ENCODE measurements at regions of chr17 and their contacts with region 1.

Region 1: DNA sequence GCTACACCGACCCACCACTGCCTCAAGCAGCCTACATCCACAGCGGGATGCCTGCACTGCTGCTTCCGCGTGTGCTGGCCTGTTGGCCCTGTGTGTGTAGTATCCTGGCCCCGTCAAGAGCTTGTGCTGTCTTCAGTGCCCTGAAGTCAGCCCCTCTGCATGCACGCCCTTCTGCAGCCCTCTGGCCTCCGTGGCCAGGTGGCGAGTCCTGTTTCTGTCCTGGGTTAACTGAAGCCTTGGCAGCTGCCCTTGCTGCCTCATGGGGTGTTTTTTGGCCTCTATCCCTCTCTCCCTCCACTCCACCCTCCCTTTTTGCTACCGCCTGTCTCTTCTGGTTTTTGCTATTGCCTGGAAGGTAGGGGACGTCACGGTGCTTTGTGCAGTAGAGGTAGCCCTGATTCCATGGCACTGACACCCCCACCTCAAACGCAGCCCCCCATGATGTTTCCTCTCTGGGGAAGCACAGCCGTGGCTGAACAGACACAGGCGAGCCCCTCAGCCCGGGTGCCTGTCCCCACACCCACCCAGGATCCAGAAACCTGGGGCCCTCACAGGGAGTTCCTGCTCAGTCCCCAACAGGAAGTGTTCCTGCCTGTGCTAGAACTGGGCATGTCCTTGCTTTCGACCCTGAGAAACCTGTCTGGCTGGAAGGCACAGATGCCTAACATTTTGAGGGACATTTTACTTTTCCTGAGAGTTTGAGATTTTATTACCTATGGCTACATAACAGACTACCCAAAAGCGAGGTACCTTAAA is 18.8 kb upstream of the AMZ2 start:
- DNase-seq: no peak
- H3K4me3 ChIP-seq: no peak overlapping the region
- H3K4me3 Mint-ChIP-seq: no peak overlapping the region
- H3K27ac Mint-ChIP-seq: peak overlapping the region; percentile 35
- H3K4me1 ChIP-seq: no peaks in the 10 kb centered on the region
- H3K4me1 Mint-ChIP-seq: no peaks in the 10 kb centered on the region
- H3K27me3 ChIP-seq: no peaks in the 10 kb centered on the region
- H3K27me3 Mint-ChIP-seq: peaks cover 2% of the 10 kb centered on the region
- CTCF ChIP-seq: no peak

Region 2: GRCh38 chr17:68152161-68152571 is 76.8 kb before region 1 on chr17:
- CTCF ChIA-PET with region 1: no interaction called
- POLR2A ChIA-PET with region 1: no interaction called
- intact Hi-C with region 1: loop called (anchors 2 kb)
- DNase-seq: no peak
- H3K4me3 ChIP-seq: no peak overlapping the region
- H3K4me3 Mint-ChIP-seq: no peak overlapping the region
- H3K27ac Mint-ChIP-seq: no peak overlapping the region
- H3K4me1 ChIP-seq: no peaks in the 10 kb centered on the region
- H3K4me1 Mint-ChIP-seq: no peaks in the 10 kb centered on the region
- H3K27me3 ChIP-seq: no peaks in the 10 kb centered on the region; the same call in 1 of the 2 replicates
- H3K27me3 Mint-ChIP-seq: peaks cover 3% of the 10 kb centered on the region
- CTCF ChIP-seq: no peak

Region 3: GRCh38 chr17:68247445-68248198 is 18.6 kb after region 1 on chr17 and contains the start of gene AMZ2:
- CTCF ChIA-PET with region 1: no interaction called
- POLR2A ChIA-PET with region 1: no interaction called
- intact Hi-C with region 1: no loop called
- DNase-seq: peak; percentile 93 to 97
- H3K4me3 ChIP-seq: peak within 1 kb of the TSS; percentile 79
- H3K4me3 Mint-ChIP-seq: peak within 1 kb of the TSS; percentile 97
- H3K27ac Mint-ChIP-seq: peak within 1 kb of the TSS; percentile 81
- H3K4me1 ChIP-seq: peaks cover 6% of the 10 kb centered on the region
- H3K4me1 Mint-ChIP-seq: peaks cover 7% of the 10 kb centered on the region
- H3K27me3 ChIP-seq: no peaks in the 10 kb centered on the region
- H3K27me3 Mint-ChIP-seq: peaks cover 12% of the 10 kb centered on the region
- CTCF ChIP-seq: no peak
- total RNA-seq, gene AMZ2: 52.2 and 60.2 TPM in 2 replicates

Region 4: GRCh38 chr17:68291844-68292695 is 63.1 kb after region 1 on chr17:
- CTCF ChIA-PET with region 1: no interaction called
- POLR2A ChIA-PET with region 1: no interaction called
- intact Hi-C with region 1: no loop called
- DNase-seq: peak; percentile 79 to 86
- H3K4me3 ChIP-seq: peak overlapping the region; percentile 87
- H3K4me3 Mint-ChIP-seq: peak overlapping the region; percentile 76
- H3K27ac Mint-ChIP-seq: peak overlapping the region; percentile 76
- H3K4me1 ChIP-seq: peaks cover 6% of the 10 kb centered on the region; the same call in 1 of the 2 replicates
- H3K4me1 Mint-ChIP-seq: peaks cover 8% of the 10 kb centered on the region
- H3K27me3 ChIP-seq: no peaks in the 10 kb centered on the region
- H3K27me3 Mint-ChIP-seq: peaks cover 3% of the 10 kb centered on the region
- CTCF ChIP-seq: peak in 1 of 2 experiments; percentile 26

Measured in Caco-2 (cell line).